PC-3 (cell line): ENCODE measurements at regions of chr11 and their contacts with region 1.

Region 1: DNA sequence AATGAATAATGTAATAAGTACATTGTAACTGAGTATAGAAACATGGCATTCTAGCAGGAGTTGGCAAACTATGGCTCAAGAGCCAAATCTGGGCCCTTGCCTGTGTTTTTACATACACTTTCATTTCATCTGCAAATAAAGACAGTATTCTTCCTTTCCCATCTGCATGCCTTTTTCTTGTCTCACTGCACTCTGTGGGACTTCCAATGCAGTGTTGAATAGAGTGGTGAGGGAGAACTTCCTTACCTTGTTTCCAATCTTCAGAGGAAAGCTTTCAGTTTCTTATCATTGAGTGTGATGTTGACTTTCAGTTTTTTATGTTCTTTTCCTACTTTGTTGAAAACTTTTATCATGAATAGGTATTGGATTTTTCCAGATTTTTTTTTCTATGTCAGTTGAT is 82.1 kb downstream of the USP47 start:
- DNase-seq: no peak
- ATAC-seq: no peak
- H3K4me3 ChIP-seq: no peak overlapping the region
- H3K27ac ChIP-seq: no peak overlapping the region
- H3K4me1 ChIP-seq: no peaks in the 10 kb centered on the region
- H3K27me3 ChIP-seq: no peaks in the 10 kb centered on the region
- CTCF ChIP-seq: no peak

Region 2: GRCh38 chr11:11856638-11857037 is 67.2 kb before region 1 on chr11:
- CTCF ChIA-PET with region 1: no interaction called
- POLR2A ChIA-PET with region 1: no interaction called
- intact Hi-C with region 1: no loop called
- DNase-seq: peak; percentile 36
- ATAC-seq: peak; percentile 76
- H3K4me3 ChIP-seq: no peak overlapping the region
- H3K27ac ChIP-seq: no peak overlapping the region
- H3K4me1 ChIP-seq: peaks cover 15% of the 10 kb centered on the region
- H3K27me3 ChIP-seq: no peaks in the 10 kb centered on the region
- CTCF ChIP-seq: no peak

Region 3: GRCh38 chr11:11909727-11910126 is 14.1 kb before region 1 on chr11:
- CTCF ChIA-PET with region 1: no interaction called
- POLR2A ChIA-PET with region 1: no interaction called
- intact Hi-C with region 1: loop called (anchors 2 kb)
- DNase-seq: no peak
- ATAC-seq: no peak; the same call in 1 of the 2 replicates
- H3K4me3 ChIP-seq: no peak overlapping the region
- H3K27ac ChIP-seq: no peak overlapping the region
- H3K4me1 ChIP-seq: no peaks in the 10 kb centered on the region
- H3K27me3 ChIP-seq: no peaks in the 10 kb centered on the region
- CTCF ChIP-seq: no peak

Region 4: GRCh38 chr11:13343931-13344717 is 1420.3 kb after region 1 on chr11:
- CTCF ChIA-PET with region 1: no interaction called
- POLR2A ChIA-PET with region 1: no interaction called
- intact Hi-C with region 1: no loop called
- DNase-seq: peak; percentile 88
- ATAC-seq: peak; percentile 35
- H3K4me3 ChIP-seq: no peak overlapping the region
- H3K27ac ChIP-seq: no peak overlapping the region
- H3K4me1 ChIP-seq: peaks cover 15% of the 10 kb centered on the region
- H3K27me3 ChIP-seq: no peaks in the 10 kb centered on the region
- CTCF ChIP-seq: peak; percentile 89